HCT116 (cell line): ENCODE measurements at regions of chr12 and their contacts with region 1.

Region 1: GRCh38 chr12:100827901-100828520 is 33.4 kb downstream of the ANO4 start:
- DNase-seq: peak; percentile 23
- ATAC-seq: peak; percentile 88
- H3K4me3 ChIP-seq: no peak overlapping the region
- H3K27ac ChIP-seq: no peak overlapping the region
- H3K4me1 ChIP-seq: peaks cover 4 to 13% of the 10 kb centered on the region in 2 experiments
- H3K27me3 ChIP-seq: no peaks in the 10 kb centered on the region
- CTCF ChIP-seq: peak; percentile 66 to 86 (median 76)
- POLR2A ChIP-seq: no peak
- RAD21 ChIP-seq: peak; percentile 89

Region 2: DNA sequence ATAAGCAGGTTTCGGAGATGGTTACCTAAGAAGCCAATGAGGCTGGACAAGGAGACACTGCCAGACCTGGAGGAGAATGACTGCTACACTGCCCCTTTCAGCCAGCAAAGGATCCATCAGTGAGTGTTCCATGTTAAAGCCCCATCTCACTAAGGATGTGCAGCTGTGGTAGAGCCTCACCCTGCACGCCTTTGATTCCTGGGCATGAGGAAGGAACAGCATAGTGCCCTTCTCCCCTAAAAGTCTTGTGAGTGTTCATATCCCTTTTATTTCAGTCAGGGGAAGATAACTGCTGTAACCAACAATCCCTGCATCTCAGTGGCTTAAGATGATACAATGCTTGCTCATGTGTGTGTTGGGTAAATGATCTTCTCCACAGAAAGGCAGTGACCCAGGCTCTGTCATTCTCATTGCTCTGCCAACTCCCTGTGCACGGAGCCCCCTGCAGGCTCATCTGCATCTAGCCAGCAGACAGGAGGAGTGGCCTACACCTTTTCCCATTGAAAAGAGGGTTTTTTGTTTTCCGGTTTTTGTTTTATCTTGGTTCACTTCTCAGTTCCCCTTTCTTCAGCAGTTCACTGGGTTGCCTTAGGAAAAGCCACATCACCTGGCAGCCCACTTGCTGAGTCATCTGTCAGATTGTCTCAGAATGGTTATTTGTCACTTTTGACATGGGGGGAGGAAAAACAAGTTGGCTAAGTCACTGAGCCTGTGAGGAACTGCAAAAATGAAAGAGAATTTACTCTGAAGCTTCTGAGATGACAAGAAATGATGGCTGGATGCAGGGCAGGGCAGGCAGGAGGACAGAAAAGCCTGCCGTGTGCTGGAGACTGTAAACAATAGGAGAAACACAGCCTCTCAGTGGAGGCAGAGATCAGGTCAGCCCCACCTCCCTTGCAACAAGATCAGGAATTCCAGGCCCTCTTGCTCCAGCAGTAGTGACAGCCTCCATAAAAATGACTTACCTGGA is 159.8 kb after region 1 on chr12:
- CTCF ChIA-PET with region 1: no interaction called
- POLR2A ChIA-PET with region 1: no interaction called
- RAD21 ChIA-PET with region 1: no interaction called
- intact Hi-C with region 1: loop called (anchors 5 kb)
- DNase-seq: peak; percentile 19
- ATAC-seq: peak; percentile 98
- H3K4me3 ChIP-seq: no peak overlapping the region
- H3K27ac ChIP-seq: no peak overlapping the region
- H3K4me1 ChIP-seq: peaks cover 9 to 12% of the 10 kb centered on the region in 2 experiments; a peak in 3 of 4 replicates
- H3K27me3 ChIP-seq: no peaks in the 10 kb centered on the region
- CTCF ChIP-seq: peak; percentile 43 to 73 (median 68); a peak in 5 of 6 replicates
- POLR2A ChIP-seq: no peak
- RAD21 ChIP-seq: peak; percentile 54

Region 3: DNA sequence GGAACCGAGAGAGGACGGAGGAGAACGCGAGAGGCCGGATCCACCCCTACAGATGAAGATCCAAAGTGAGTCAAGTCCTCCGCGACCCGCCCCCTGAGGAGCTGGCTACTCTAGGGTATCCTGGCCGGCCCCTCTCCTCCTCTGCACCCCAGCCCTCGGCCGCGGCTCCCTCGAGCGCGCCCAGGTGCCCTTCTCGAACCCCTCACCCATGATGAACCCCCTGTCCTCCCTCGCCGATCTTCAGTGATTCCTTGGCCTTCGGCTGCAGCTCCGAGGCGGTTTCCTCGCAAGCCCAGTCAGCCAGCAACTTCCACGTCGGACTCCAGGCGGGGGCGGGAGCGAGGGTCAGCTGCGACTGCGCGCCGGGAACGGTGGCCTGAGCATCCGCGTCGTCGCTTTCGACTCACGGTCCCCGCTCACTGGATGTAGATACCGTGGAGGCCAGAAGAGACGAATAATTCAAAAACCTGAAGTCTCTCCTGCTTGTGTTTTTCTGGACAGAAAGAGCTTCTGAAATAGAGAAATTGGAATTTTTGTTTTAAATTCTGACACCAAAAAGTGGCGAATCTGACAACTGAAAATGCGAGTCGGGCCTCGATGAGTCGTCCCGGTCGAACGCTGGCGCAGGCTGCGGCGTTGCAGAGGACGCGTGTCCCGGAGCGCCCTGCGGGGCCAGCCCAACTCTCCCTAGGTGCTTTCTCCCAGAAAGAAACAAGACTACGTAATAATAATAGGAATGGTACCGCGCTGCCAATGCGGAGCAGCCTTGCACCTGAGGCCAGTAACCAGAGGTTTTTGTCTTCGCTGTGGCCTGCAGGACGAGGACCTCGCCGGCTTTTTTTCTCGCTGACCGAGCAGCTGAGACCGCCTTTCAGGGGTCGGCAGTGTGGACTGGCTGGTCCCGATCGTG is 579.7 kb after region 1 on chr12 and contains the start of gene ARL1:
- CTCF ChIA-PET with region 1: no interaction called
- POLR2A ChIA-PET with region 1: no interaction called
- RAD21 ChIA-PET with region 1: no interaction called
- intact Hi-C with region 1: loop called (anchors 5 kb)
- DNase-seq: peak; percentile 77
- ATAC-seq: peak; percentile 83
- H3K4me3 ChIP-seq: peak within 1 kb of the TSS; percentile 84 to 98
- H3K27ac ChIP-seq: peak within 1 kb of the TSS; percentile 93
- H3K4me1 ChIP-seq: peaks cover 22 to 31% of the 10 kb centered on the region in 2 experiments
- H3K27me3 ChIP-seq: no peaks in the 10 kb centered on the region
- CTCF ChIP-seq: no peak
- POLR2A ChIP-seq: peak; percentile 82
- RAD21 ChIP-seq: no peak
- total RNA-seq, gene ARL1: 76.0 TPM